ENCODE measurements at regions of chr12 and their contacts with region 1.

Region 1: DNA sequence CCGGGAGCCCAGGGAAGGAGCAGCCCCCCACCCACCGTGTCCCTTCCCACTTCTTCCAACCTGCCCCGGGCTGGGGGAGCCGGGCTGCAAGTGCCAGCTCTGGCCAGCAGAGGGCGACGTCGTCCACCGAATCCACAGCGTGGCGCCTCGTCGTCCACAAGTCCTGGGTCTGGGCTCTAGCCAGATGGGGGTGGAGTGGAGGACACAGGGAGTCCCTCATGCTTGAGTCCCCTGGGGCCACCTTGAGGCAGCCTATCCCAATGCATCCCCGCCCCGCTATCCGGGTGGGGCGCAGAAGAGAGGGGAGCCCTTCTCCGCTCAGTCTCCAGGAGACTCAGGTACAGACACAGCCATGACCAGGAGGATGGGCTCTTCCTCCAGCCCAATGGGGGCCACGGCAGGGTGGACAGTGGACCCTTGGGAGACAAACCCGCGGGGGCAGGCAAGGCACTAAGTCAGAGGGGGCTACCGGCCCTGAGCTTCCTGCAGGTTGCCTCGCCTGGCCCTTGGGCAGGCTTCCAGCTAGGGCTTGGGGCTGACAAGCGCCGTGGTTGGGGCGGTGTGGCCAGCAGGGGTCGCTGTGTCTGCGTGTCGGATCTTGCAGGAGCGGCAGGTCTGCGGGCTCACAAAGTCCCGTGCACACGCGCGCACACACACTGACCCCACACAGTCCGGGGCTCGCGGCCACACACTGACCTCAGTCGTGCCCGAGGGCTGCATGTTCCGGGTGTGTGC is 5.5 kb downstream of the AQP5 start:
- DNase-seq: peak; percentile 95
- ATAC-seq: peak; percentile 76
- H3K4me3 Mint-ChIP-seq: peak overlapping the region; percentile 59
- H3K27ac Mint-ChIP-seq: no peak overlapping the region
- H3K4me1 Mint-ChIP-seq: peaks cover 10% of the 10 kb centered on the region
- H3K27me3 Mint-ChIP-seq: peaks cover 33% of the 10 kb centered on the region
- CTCF ChIP-seq: peak; percentile 91

Region 2: DNA sequence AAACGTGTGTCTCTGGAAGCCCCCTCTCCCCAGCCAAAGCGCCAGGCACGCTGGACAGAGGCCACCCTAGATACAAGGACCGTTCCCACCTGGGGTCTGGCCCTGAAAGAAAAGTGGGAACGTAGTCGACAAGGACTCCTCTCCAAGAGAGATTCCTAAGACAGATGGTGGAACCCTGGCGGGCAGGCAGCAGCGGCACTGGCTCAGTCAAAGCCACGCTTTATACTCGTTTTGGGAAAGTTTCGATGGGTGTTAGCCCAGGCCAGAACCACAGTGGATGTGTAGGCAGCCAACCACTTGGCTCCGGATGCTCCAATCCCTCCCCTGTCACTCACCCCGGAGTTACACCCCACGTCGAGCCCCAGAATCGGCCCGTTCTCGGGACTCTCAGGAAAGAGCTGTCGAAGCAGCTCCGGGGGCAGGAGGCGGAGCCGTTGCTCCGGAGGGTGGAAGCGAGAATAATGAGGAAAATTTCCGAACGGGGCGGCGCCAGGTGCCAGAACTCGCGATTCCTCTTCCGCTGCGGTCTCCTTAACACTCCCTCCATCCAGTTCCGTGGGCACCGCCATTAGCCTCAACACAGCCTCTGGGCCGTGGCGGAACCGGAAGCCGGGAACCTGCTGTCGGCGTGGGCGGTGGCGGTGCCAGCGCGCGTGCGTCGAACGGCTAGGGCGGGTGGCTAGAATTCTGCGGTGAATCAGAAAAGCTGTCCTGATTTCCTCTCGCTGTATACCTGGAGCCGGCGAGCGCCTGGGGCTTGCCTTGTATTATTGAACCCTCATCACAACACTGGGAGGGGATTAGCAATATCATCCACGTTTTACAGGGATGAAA is 124.5 kb before region 1 on chr12 and contains the start of gene BCDIN3D:
- CTCF ChIA-PET with region 1: interaction called, 11 read pairs
- POLR2A ChIA-PET with region 1: no interaction called
- DNase-seq: peak; percentile 79
- ATAC-seq: peak; percentile 82
- H3K4me3 Mint-ChIP-seq: peak within 1 kb of the TSS; percentile 92
- H3K27ac Mint-ChIP-seq: peak within 1 kb of the TSS; percentile 98
- H3K4me1 Mint-ChIP-seq: peaks cover 13% of the 10 kb centered on the region
- H3K27me3 Mint-ChIP-seq: peaks cover 23% of the 10 kb centered on the region
- CTCF ChIP-seq: no peak
- total RNA-seq, gene BCDIN3D: 1.6 to 3.2 TPM (median 2.4 TPM) in 3 replicates

Region 3: GRCh38 chr12:49903695-49904423 is 63.4 kb before region 1 on chr12 and contains the start of gene FAIM2:
- CTCF ChIA-PET with region 1: interaction called, 16 read pairs
- POLR2A ChIA-PET with region 1: no interaction called
- DNase-seq: peak; percentile 54
- ATAC-seq: peak; percentile 38
- H3K4me3 Mint-ChIP-seq: peak within 1 kb of the TSS; percentile 66
- H3K27ac Mint-ChIP-seq: no peak within 1 kb of the TSS
- H3K4me1 Mint-ChIP-seq: peaks cover 8% of the 10 kb centered on the region
- H3K27me3 Mint-ChIP-seq: peaks cover 37% of the 10 kb centered on the region
- CTCF ChIP-seq: no peak
- total RNA-seq, gene FAIM2: 0.18 to 0.30 TPM (median 0.22 TPM) in 3 replicates

Region 4: DNA sequence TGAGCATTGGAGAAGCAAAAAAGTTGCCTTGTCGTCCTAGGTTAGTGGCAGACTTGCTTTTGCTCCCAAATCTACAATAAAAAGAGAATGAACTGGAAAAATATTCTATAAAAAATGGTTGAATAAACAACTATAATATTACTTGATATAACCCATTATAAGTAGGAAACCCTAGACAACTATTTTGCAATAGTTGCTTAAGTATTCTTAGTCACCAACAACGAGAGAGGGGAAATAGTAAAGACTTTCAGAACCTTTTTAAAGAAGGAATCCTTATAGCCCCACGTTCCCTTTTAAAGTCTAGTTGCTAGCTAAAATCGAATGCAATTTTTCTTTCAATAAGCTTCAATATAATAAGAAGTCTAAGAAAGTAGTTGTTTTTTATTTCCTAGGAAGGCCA is 23.1 kb after region 1 on chr12:
- CTCF ChIA-PET with region 1: interaction called, 42 read pairs
- POLR2A ChIA-PET with region 1: no interaction called
- DNase-seq: no peak
- ATAC-seq: no peak
- H3K4me3 Mint-ChIP-seq: no peak overlapping the region
- H3K27ac Mint-ChIP-seq: no peak overlapping the region
- H3K4me1 Mint-ChIP-seq: peaks cover 8% of the 10 kb centered on the region
- H3K27me3 Mint-ChIP-seq: no peaks in the 10 kb centered on the region
- CTCF ChIP-seq: no peak

Region 5: DNA sequence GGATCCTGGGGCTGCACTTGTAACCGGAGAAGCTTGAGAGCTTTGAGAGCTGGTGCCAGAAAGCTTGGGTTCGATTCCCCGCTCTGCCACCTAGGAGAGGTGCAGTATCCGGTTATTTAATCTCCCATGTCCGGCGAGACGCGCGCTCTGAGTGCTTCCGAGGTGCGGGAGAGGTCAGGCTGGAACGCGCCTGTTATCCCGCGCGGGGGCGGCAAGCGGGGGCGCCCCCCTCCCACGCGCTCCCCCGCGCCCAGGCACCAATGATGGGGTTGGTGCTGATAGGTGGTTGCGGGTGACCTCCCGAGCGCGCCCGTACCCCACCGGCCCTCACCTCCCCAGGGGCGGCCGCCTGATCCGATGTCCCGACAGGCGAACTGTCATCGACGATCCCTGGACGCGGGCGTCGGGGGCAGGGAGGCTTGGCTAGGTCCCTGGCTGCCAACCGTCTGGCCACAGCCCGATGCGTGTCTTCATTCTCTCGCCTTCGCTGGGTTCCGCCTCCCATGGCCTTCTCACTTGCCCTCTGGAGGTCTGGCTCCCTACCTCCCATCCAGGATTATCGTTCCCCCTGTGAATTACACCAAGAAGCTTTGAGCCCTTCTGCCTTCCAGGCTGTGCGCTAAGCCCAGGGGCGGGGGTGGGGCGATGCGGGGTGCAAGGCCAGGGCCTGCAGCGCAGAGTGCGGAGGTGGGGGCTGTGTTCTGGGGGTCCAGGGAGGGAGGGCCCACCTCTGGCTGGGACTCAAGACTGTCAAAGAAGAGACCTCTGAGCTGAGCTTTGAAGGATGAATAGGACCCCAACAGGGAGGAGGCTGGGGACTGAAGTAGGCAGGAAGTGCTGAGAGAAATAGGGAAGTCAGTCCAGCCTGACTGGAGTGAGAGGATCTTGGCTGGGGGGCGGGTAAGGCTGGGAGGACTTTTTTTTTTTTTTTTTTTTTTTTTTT is 65.7 kb after region 1 on chr12:
- CTCF ChIA-PET with region 1: interaction called, 64 read pairs
- POLR2A ChIA-PET with region 1: no interaction called
- DNase-seq: peak; percentile 53
- ATAC-seq: peak; percentile 78
- H3K4me3 Mint-ChIP-seq: peak overlapping the region; percentile 78
- H3K27ac Mint-ChIP-seq: no peak overlapping the region
- H3K4me1 Mint-ChIP-seq: peaks cover 3% of the 10 kb centered on the region
- H3K27me3 Mint-ChIP-seq: no peaks in the 10 kb centered on the region; the same call in 1 of the 2 replicates
- CTCF ChIP-seq: no peak

Region 6: DNA sequence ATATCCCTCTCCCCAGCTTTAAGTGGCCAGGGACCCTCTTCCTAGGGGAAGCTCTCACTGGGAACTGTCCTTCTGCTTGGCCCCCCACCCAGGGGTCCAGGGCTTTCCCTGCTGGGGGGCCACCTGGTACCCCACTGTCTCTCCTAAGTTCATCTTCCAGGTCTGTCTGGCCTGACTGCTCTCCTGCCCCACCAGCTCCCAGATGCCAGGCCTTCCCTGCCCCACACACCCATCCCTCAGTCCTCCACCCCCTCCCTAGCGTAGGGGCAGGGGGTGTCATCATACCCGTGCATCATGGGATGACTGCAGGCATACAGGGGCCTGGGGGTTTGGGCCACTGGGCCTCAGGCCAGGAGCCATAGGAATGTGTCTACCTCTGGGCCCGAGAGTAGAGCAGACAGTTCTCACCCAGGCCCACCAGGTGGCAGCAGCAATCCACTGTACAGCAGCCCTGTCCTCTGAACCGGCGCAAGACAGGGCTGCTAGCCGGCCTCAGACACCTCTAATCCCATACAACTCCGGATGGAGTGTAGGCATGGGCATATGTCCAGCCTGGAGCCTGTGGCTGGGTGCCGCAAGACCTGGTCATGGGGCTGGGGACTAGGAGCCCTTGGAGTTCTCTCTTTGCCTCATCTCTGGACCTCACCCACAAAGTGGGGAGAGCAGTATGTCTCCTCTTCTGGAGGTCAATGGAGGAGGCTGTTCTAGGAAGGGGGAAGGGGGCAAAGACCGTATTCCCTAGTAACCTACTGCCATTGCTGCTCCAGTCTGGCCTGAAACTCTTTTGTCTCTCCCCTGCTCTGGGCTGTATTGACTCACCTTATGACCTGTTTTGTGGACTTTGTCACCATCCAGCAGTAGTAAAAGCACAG is 108.0 kb after region 1 on chr12:
- CTCF ChIA-PET with region 1: interaction called, 219 read pairs
- POLR2A ChIA-PET with region 1: interaction called, 4 read pairs
- DNase-seq: peak; percentile 93
- ATAC-seq: peak; percentile 93
- H3K4me3 Mint-ChIP-seq: no peak overlapping the region
- H3K27ac Mint-ChIP-seq: peak overlapping the region; percentile 72; the same call in 1 of the 2 replicates
- H3K4me1 Mint-ChIP-seq: peaks cover 18% of the 10 kb centered on the region
- H3K27me3 Mint-ChIP-seq: peaks cover 8% of the 10 kb centered on the region
- CTCF ChIP-seq: peak; percentile 84